Adrenal gland (tissue), 19 donors: ENCODE measurements at regions of chr6 and their contacts with region 1.

Region 1: DNA sequence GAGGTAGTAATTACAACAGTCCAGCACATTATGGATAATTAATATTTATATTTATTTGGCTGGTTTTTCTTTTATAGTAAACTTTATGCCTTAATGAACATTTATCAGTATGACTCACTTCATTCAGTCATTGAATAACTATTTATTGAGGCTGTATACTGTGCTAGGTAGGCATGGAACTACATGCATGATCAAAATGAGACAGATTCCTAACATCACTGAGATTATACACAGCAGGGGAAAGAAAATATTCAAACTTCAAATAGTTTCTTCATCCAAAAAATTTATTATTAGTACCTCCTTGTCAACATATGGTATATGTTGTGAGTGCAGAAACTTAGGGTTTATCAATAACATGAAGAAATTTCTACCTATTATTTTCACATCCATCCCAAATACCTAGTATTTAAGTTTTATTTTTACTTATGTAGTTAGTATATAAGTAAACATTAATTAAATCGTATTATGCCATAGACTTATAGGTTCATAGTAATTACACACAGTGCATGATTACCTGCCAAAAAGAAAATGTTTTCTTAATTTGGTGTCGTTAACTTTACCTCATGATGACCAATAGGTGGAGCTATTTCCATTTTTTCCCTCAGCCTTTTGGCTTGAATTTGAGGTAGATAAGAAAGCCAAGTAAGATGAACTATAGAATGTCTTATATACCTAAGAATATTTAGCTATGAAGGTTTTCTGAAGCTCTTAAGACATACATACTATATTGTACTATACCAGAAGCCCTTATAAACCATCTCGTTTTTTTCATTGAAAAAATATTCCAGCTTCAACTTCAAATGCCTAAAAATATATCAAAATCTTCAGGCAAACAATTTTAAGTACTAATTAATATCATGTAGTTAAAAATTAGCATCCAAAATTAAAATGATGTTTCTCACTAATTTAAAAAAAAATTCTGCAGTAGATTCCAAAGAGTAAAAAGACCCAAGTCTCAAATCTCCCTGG is 12.5 kb upstream of the TMEM30A start:
- DNase-seq: no peak
- H3K4me3 ChIP-seq: no peak overlapping the region
- H3K27ac ChIP-seq: no peak overlapping the region
- H3K4me1 ChIP-seq: no peaks in the 10 kb centered on the region
- H3K27me3 ChIP-seq: no peaks in the 10 kb centered on the region
- CTCF ChIP-seq: peak; percentile 58 to 77 (median 68)
- POLR2A ChIP-seq: no peak

Region 2: GRCh38 chr6:75249837-75250236 is 47.3 kb before region 1 on chr6:
- intact Hi-C with region 1: no loop called
- DNase-seq: no peak
- H3K4me3 ChIP-seq: no peak overlapping the region
- H3K27ac ChIP-seq: no peak overlapping the region
- H3K4me1 ChIP-seq: peaks cover 0 to under 1% of the 10 kb centered on the region in 2 donors
- H3K27me3 ChIP-seq: no peaks in the 10 kb centered on the region
- CTCF ChIP-seq: no peak
- POLR2A ChIP-seq: no peak

Region 3: GRCh38 chr6:75418233-75418632 is 121.1 kb after region 1 on chr6:
- intact Hi-C with region 1: no loop called
- DNase-seq: no peak
- H3K4me3 ChIP-seq: no peak overlapping the region
- H3K27ac ChIP-seq: no peak overlapping the region
- H3K4me1 ChIP-seq: peaks cover 3% of the 10 kb centered on the region in 2 donors
- H3K27me3 ChIP-seq: no peaks in the 10 kb centered on the region
- CTCF ChIP-seq: no peak
- POLR2A ChIP-seq: no peak

Region 4: GRCh38 chr6:75526502-75527127 is 229.5 kb after region 1 on chr6:
- intact Hi-C with region 1: loop called (anchors 5 to 10 kb)
- DNase-seq: peak; percentile 30 to 86 (median 61)
- H3K4me3 ChIP-seq: no peak overlapping the region
- H3K27ac ChIP-seq: no peak overlapping the region
- H3K4me1 ChIP-seq: no peaks in the 10 kb centered on the region
- H3K27me3 ChIP-seq: no peaks in the 10 kb centered on the region
- CTCF ChIP-seq: peak in 5 of 6 experiments; percentile 72 to 86 (median 84)
- POLR2A ChIP-seq: no peak